GM12878 (cell line): ENCODE measurements at regions of chr1 and their contacts with region 1.

Region 1: DNA sequence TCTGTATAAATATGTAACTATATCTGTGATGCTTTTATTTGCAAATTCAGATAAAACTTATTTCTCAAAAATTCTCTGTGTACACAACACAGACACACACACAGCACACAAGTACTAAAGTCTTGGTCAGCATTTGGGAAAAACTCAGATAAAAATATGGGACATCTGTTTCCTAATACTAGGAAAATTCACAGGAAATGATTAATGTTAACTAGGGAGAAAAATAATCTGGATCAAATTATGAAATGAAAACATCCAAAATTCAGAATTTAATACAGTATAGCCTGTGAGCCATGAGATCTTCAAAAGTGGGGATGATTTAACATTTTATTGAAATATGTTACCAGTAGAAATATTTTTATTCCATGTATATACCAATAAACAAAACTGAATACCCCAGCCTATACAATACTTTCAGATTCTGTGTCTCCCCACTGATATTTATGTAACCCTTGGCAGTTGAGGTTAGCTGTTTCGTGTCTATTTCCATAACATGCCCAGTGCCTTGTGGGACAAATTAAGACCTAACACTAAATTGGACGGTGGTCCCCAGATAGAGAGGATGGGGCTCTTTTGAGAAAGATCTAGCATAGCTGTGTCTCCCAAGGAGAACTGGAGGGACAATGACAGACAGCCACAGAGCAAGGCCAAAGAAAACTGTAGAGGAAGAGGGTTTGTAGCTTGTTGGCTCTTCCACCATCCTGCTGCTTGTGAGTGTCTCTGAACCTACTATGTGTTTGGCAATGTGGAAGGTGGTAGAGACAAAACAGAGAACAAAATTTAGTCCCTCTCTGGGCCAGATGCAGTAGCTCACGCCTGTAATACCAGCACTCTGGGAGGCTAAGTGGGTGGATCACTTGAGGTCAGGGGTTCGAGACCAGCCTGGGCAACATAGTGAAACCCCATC is 47.2 kb downstream of the GNG12 start:
- DNase-seq: no peak
- ATAC-seq: peak; percentile 14; the same call in 2 of the 3 replicates
- H3K4me3 ChIP-seq: no peak overlapping the region
- H3K27ac ChIP-seq: no peak overlapping the region
- H3K4me1 ChIP-seq: no peaks in the 10 kb centered on the region
- H3K27me3 ChIP-seq: no peaks in the 10 kb centered on the region
- CTCF ChIP-seq: no peak
- EP300 ChIP-seq: no peak
- POLR2A ChIP-seq: no peak
- RAD21 ChIP-seq: no peak

Region 2: DNA sequence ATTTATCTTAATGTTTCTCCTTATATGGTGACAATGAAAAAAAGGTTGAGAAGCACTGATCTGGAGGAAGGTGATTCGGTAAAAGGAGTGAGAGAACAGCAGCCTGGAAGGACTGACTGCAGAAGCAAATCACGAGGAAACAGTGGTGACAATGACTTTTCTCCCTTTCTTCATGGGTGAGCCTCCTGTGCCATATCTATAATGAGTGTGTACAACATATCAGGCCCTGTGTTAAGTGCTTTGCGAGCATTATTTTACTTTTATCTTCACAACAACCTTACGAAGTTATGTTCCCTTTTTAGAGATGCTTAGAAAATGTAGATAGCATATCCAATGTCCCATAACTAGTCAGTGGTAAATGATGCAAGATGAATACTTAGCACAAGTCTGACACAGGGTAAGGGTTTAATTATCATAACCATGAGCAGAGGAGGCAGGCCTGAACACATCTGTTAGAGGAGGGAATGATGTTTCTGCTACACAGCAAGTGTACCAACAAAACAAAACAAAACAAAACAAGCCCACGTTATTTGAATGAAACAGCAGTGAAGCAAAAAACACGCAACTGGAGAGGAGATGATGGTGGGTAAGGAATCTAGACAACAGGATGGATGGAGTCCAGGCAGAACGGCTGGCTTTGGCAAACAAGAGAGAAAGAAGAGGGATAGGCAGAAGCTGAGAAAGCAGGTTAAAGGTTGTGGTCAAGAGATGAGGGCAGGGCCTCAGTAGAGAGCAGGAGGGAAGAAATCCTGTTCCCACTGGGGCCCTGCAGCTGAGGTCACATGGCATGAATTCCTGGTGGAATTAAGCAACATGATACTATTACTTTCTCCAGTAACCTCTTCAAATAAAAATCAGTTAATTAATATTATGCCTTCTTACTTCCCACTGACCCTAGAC is 17.5 kb after region 1 on chr1:
- CTCF ChIA-PET with region 1: interaction called, 7 read pairs
- POLR2A ChIA-PET with region 1: interaction called, 6 read pairs
- RAD21 ChIA-PET with region 1: interaction called, 26 read pairs
- SMC1A ChIA-PET with region 1: interaction called, 389 read pairs
- in situ Hi-C with region 1: no loop called
- intact Hi-C with region 1: no loop called
- DNase-seq: no peak
- ATAC-seq: peak; percentile 19; the same call in 2 of the 3 replicates
- H3K4me3 ChIP-seq: no peak overlapping the region
- H3K27ac ChIP-seq: no peak overlapping the region
- H3K4me1 ChIP-seq: no peaks in the 10 kb centered on the region
- H3K27me3 ChIP-seq: no peaks in the 10 kb centered on the region; a peak in 1 of 4 replicates
- CTCF ChIP-seq: no peak
- EP300 ChIP-seq: no peak
- POLR2A ChIP-seq: no peak
- RAD21 ChIP-seq: no peak

Region 3: GRCh38 chr1:67824766-67825165 is 38.7 kb after region 1 on chr1:
- CTCF ChIA-PET with region 1: interaction called, 18 read pairs
- POLR2A ChIA-PET with region 1: interaction called, 24 read pairs
- RAD21 ChIA-PET with region 1: interaction called, 87 read pairs
- SMC1A ChIA-PET with region 1: interaction called, 1,058 read pairs
- in situ Hi-C with region 1: no loop called
- intact Hi-C with region 1: no loop called
- DNase-seq: no peak
- ATAC-seq: no peak
- H3K4me3 ChIP-seq: no peak overlapping the region
- H3K27ac ChIP-seq: no peak overlapping the region
- H3K4me1 ChIP-seq: no peaks in the 10 kb centered on the region
- H3K27me3 ChIP-seq: peaks cover 0 to 3% of the 10 kb centered on the region in 2 experiments; a peak in 1 of 4 replicates
- CTCF ChIP-seq: no peak
- EP300 ChIP-seq: no peak
- POLR2A ChIP-seq: no peak
- RAD21 ChIP-seq: no peak

Region 4: GRCh38 chr1:67832737-67833601 is 46.9 kb after region 1 on chr1 and contains the start of gene GNG12:
- CTCF ChIA-PET with region 1: interaction called, 5 read pairs
- POLR2A ChIA-PET with region 1: interaction called, 10 read pairs
- RAD21 ChIA-PET with region 1: interaction called, 25 read pairs
- SMC1A ChIA-PET with region 1: interaction called, 1,058 read pairs
- in situ Hi-C with region 1: no loop called
- intact Hi-C with region 1: no loop called
- DNase-seq: no peak
- ATAC-seq: peak; percentile 78
- H3K4me3 ChIP-seq: no peak within 1 kb of the TSS
- H3K27ac ChIP-seq: no peak within 1 kb of the TSS
- H3K4me1 ChIP-seq: no peaks in the 10 kb centered on the region
- H3K27me3 ChIP-seq: peaks cover 6 to 11% of the 10 kb centered on the region in 2 experiments; a peak in 3 of 4 replicates
- CTCF ChIP-seq: no peak
- EP300 ChIP-seq: no peak
- POLR2A ChIP-seq: no peak
- RAD21 ChIP-seq: no peak
- polyA plus RNA-seq, gene GNG12: 0.22 to 0.27 TPM

Region 5: DNA sequence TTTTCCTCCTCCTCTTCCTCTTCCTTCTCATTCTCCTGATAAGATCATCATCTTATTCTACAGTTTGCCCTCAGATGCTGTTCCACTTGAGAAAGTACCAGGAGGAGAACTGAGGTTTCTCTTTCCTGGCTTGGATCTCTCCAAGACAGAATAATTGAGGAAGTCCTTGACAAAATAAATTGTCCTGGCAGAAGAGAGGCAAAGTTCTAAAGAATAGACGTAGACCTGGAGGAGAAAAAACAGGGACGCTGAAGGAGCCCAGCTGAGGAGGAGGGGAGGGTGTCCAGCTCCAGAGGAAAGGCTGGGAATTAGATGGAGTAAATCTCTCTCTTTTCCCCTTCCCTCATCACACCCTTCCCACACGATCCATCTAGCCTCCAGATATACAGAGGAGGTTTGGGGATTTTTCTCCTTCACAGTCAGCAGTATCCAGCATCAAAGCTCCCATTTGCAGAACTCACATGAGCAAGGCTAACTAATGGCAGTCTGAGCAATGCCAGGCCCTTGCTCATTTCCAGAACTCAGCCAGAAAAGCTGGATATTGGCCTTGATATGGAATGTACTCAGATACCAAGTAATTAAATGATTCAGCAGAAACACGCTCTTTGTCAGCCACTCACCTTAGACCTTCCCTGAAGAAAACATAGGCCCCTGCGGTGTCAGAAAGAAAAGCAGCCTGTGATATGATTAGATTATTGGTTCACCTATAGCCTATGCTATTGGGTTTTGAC is 52.2 kb after region 1 on chr1:
- CTCF ChIA-PET with region 1: interaction called, 5 read pairs
- POLR2A ChIA-PET with region 1: interaction called, 9 read pairs
- RAD21 ChIA-PET with region 1: interaction called, 17 read pairs
- SMC1A ChIA-PET with region 1: interaction called, 1,058 read pairs
- in situ Hi-C with region 1: no loop called
- intact Hi-C with region 1: no loop called
- DNase-seq: no peak
- ATAC-seq: peak; percentile 16; the same call in 1 of the 3 replicates
- H3K4me3 ChIP-seq: no peak overlapping the region
- H3K27ac ChIP-seq: no peak overlapping the region
- H3K4me1 ChIP-seq: no peaks in the 10 kb centered on the region
- H3K27me3 ChIP-seq: peaks cover 0 to 3% of the 10 kb centered on the region in 2 experiments; a peak in 2 of 4 replicates
- CTCF ChIP-seq: no peak
- EP300 ChIP-seq: no peak
- POLR2A ChIP-seq: no peak
- RAD21 ChIP-seq: no peak